ENCODE measurements at regions of chr5 and their contacts with region 1.

Region 1: DNA sequence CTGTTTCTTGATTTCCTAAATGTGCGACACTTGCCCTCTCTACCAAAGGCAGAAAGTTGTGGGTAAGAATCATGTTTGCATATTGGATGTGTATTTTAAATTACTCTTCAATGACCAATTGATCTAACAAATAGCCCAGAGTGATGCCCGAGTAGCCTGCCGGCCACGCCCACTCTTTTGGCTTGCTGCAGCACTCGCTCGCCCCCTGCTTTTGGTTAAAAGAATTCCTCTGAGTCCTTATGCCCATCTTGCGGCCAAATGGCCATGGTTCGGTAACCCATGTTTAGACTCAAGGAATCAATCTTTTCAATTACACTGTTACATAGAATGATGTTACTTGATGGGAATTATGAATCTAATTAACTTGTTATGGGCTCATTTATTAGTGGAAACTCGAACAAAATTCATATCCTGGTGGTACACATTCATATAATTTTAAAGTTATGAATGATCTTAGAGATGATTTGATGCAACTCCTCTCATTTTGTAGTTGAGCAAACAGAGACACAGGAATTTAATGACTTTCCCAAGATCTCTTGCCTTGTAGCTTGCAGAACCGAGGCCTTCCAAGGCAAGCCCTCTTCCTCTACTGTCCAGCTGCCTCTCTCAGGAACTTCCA is 36.5 kb downstream of the PPIC start:
- DNase-seq: peak; percentile 58
- H3K4me3 Mint-ChIP-seq: no peak overlapping the region
- H3K27ac Mint-ChIP-seq: no peak overlapping the region
- H3K4me1 Mint-ChIP-seq: no peaks in the 10 kb centered on the region
- H3K27me3 Mint-ChIP-seq: no peaks in the 10 kb centered on the region

Region 2: DNA sequence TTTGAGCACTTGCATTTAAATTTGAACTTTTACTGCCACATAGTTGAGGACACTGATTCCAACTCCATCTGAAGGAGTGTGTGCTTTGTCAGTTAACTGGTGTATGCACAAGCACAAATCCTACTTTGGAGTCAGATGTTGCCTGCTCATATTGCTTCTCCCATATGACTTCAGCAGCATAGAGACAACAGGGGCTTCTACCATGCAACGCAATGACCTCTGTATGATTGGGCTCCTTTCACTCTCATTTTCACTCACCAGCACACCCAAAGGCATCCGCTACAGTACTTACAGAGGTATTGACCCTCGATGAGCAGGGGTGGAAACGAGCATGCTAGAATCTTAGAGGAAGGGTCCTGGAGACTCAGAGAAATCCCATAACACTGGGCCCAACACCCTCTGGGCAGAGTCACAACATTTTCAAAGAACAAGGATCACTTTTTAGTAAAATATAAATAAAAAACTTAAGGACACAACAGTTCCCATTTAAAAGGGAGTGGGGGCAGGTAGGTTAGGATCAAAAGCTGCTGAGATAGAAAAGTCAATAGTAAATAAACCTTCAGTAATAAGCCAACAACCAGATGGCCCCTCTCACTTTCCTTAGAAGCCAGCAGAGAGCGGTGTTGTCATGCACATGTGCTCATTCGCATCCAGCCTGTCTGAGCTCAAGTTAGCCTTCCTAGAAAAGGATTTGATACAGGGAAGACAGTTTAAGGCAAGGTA is 484.2 kb before region 1 on chr5:
- CTCF ChIA-PET with region 1: no interaction called
- intact Hi-C with region 1: loop called (anchors 2 kb)
- DNase-seq: peak; percentile 14
- H3K4me3 Mint-ChIP-seq: no peak overlapping the region
- H3K27ac Mint-ChIP-seq: no peak overlapping the region
- H3K4me1 Mint-ChIP-seq: no peaks in the 10 kb centered on the region
- H3K27me3 Mint-ChIP-seq: peaks cover 8% of the 10 kb centered on the region

Measured in activated naive CD4-positive, alpha-beta T cell treated with anti-CD3 and anti-CD28 coated beads for 36 hours (primary cell).